ENCODE measurements at regions of chr9 and their contacts with region 1.

Region 1: GRCh38 chr9:77163884-77164283 is 13.4 kb upstream of the VPS13A start:
- DNase-seq: peak; percentile 62
- H3K4me3 ChIP-seq: no peak overlapping the region
- CTCF ChIP-seq: no peak

Region 2: DNA sequence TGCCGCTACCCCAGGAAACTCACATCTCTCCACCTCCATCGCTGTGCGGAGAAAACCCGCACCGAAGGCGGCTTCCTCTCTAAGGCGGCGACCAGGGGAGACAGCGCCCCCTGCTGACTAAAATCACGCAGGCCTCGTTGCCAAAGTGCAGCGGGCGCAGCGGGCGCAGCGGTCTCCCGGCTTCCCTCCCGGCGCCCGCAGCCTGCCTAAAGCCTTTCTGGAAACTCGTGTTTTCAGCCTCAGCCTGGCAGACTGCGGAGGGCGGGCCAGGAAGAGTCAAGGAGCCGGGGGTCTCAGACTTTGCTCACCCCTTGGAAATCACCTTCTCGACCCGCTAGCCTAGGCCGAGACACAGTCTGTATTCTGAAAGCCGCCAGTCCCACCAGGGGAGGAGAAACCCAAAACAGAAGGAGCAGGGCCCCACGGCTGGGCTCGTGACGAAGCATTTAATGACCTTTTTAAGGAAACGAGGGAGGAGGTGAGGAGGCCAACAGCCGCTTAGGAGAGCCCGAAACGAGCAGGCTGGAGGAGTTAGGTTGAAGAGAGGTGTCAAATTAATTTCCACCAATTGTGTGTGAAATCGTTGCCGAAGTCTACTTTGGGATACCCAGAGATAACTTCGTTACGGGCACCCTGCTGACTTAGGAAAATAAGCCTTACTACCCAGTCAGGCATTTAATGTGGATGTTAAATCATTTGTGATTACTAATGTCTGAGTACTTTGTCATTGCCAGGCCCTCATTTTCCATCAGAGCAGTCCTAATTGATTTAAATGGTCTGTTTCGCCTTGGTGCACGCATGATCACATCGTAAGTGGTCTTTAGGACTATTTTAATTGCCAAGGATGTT is 151.7 kb before region 1 on chr9:
- CTCF ChIA-PET with region 1: no interaction called
- POLR2A ChIA-PET with region 1: no interaction called
- DNase-seq: no peak
- H3K4me3 ChIP-seq: peak overlapping the region; percentile 12
- CTCF ChIP-seq: peak; percentile 85

Region 3: GRCh38 chr9:77085423-77085822 is 78.5 kb before region 1 on chr9:
- CTCF ChIA-PET with region 1: no interaction called
- POLR2A ChIA-PET with region 1: no interaction called
- DNase-seq: no peak
- H3K4me3 ChIP-seq: no peak overlapping the region
- CTCF ChIP-seq: no peak

Region 4: DNA sequence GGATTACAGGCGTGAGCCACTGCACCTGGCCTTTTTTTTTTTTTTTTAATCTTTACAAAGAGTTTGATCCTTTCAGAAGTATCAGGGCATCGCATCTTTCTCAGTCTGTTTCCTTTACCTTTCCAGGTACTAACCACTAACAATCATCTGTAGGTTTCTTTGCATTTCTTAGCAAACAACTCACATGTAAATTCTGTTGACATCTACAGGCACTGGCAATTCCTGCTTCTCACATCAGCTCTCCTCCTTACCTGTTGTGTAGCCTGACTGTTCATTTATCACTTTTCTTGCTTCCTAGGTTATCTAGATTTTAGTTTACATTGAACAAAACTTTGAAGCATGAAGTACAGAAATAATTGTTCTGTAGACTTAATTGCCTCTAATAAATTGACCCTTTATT is 14.0 kb before region 1 on chr9:
- CTCF ChIA-PET with region 1: interaction called, 42 read pairs
- POLR2A ChIA-PET with region 1: no interaction called
- DNase-seq: no peak
- H3K4me3 ChIP-seq: no peak overlapping the region
- CTCF ChIP-seq: no peak

Region 5: DNA sequence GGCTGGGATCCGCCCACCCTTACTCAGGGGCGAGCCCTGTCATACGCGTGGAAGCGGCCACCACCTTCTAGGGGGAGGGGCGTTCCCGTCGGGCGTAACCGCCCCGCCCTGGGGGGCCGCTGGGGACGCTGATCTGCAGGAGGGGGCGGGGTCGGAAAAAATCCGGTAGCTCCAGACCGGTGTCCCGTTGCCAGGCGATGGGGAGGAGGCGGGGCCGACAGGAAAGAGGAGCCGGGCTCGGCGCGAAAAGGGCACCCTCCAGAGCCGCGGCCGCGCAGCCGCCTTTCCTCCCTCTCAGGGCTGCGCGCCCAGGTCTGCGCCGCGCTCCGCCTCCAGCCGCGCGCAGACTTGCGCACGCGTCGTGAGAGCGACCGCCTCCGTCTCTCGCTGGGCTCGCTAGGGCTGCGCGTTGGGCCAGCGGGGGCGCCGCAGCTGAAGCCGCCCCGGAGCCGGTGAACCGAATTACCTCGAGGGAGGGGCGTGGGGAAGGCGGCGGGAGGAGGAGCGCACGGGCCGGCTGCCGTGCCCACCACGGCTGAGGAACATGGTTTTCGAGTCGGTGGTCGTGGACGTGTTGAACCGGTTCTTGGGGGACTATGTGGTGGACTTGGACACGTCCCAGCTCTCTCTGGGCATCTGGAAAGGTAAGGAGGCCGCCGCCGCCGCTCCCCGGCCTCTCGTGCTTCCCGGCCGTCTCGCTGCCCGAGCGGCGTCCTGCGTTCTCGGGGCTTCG is 13.4 kb after region 1 on chr9 and contains the start of gene VPS13A:
- CTCF ChIA-PET with region 1: interaction called, 51 read pairs
- POLR2A ChIA-PET with region 1: no interaction called
- DNase-seq: peak; percentile 28
- H3K4me3 ChIP-seq: peak within 1 kb of the TSS; percentile 94
- CTCF ChIP-seq: peak; percentile 51

Region 6: DNA sequence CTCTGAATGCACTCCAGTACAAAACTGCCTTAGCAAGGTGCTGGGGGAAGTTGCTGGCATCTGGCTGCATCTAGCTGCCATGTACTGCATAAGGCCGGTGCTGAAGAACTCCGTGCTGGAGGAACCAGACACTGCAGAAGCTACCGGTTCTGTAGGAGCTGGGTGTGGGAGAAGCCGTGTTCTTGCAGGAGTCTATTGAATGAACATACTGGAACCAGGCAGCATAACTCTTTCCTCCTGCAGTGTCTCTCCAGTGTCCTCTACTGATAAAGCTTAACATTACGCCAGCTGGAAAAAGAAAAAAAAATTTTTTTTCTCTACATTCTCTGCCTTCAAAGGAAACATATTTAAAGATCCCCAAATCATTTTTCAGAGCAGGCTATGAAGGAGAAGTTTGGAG is 52.0 kb after region 1 on chr9:
- CTCF ChIA-PET with region 1: interaction called, 32 read pairs
- POLR2A ChIA-PET with region 1: no interaction called
- DNase-seq: no peak
- H3K4me3 ChIP-seq: no peak overlapping the region
- CTCF ChIP-seq: peak; percentile 33

Region 7: GRCh38 chr9:77562019-77562748 is 398.3 kb after region 1 on chr9:
- CTCF ChIA-PET with region 1: no interaction called
- POLR2A ChIA-PET with region 1: no interaction called
- DNase-seq: no peak
- H3K4me3 ChIP-seq: no peak overlapping the region
- CTCF ChIP-seq: no peak